Brain microvascular endothelial cell (primary cell): ENCODE measurements at regions of chr17 and their contacts with region 1.

Region 1: GRCh38 chr17:40349920-40350909 is 14.3 kb downstream of the GJD3 start:
- DNase-seq: peak; percentile 66
- H3K4me3 ChIP-seq: no peak overlapping the region
- H3K27ac ChIP-seq: peak overlapping the region; percentile 7
- H3K27me3 ChIP-seq: no peaks in the 10 kb centered on the region
- CTCF ChIP-seq: no peak

Region 2: DNA sequence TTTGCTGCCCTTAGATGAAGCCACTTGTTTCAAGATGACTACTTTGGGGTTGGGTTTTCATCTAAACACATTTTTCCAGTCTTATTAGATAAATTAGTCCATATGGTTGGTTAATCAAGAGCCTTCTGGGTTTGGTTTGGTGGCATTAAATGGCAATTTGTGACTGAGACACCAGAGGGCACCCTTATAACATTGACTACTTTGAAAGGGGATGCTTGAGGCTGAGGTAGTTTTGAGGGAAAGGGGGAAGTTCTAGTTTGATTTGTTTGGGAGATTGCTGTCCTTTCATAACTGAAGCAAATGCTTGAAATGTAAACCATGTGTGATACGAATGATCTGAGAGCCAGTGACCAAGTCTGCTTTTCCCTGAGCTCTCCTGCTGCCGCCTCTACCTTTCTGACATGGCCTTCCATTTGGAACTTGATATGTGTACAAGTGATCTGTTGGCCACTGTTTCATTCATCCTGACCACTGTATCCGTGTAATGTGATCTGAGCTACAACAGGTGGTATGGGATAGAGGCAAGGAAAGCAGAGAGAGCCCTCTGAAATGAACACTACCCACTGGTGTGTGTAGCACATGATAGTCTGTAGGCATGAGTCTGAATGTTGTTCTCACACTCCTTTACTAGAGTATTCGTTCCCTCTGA is 47.1 kb before region 1 on chr17:
- in situ Hi-C with region 1: loop called (anchors 5 kb)
- DNase-seq: peak; percentile 67
- H3K4me3 ChIP-seq: no peak overlapping the region
- H3K27ac ChIP-seq: no peak overlapping the region
- H3K27me3 ChIP-seq: no peaks in the 10 kb centered on the region
- CTCF ChIP-seq: peak; percentile 76